ENCODE measurements at regions of chr17 and their contacts with region 1.

Region 1: GRCh38 chr17:39754161-39754951 is 16.6 kb downstream of the GRB7 start:
- DNase-seq: peak; percentile 92 to 96
- ATAC-seq: peak; percentile 93 to 95 (median 94)
- H3K4me3 ChIP-seq: peak overlapping the region; percentile 84
- H3K27ac ChIP-seq: peak overlapping the region; percentile 81
- H3K4me1 ChIP-seq: no peaks in the 10 kb centered on the region
- H3K27me3 ChIP-seq: peaks cover 0 to 3% (median 0%) of the 10 kb centered on the region in 3 donors
- CTCF ChIP-seq: peak; percentile 97

Region 2: DNA sequence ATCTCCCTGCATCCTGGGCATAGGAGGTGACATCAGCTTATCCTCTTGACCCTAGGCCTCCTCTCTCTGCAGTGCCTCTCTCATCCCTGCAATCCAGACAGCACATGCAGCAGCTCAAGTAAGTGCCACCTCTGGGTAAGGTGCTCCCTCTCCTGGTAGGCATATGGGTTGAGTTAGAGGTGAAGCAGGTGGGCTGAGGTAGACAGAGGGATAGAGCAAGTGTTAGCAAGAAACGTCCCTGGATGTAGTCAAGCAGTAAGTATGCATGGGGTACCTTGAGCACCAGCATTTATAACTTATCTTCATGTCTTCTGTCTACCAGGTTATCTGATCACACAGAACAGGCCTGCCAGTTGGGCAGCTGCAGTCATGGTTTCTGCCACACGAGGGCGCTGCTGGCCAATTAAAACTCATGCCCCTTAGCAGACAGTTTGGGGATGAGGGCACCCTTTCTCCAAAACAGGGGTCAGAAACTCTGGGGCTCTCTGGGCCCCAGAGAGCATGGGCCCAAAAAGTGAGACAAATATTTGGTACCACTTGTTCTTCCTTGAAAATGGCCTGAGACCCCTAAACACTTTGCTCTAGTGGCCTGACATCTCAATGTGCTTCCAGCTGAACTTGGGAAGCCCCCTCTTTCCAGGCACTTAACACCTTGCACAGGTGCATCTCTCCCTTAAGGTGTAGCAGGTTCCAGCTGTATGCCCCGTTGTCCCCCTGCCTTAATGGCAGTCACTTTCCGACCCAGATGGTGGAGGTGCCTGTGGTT is 206.5 kb before region 1 on chr17:
- intact Hi-C with region 1: loop called in 1 of 2 experiments (anchors 5 kb)
- DNase-seq: peak; percentile 62 to 83
- ATAC-seq: peak; percentile 55 to 87 (median 76)
- H3K4me3 ChIP-seq: no peak overlapping the region
- H3K27ac ChIP-seq: no peak overlapping the region
- H3K4me1 ChIP-seq: peaks cover 8% of the 10 kb centered on the region
- H3K27me3 ChIP-seq: no peaks in the 10 kb centered on the region
- CTCF ChIP-seq: peak; percentile 88

Region 3: DNA sequence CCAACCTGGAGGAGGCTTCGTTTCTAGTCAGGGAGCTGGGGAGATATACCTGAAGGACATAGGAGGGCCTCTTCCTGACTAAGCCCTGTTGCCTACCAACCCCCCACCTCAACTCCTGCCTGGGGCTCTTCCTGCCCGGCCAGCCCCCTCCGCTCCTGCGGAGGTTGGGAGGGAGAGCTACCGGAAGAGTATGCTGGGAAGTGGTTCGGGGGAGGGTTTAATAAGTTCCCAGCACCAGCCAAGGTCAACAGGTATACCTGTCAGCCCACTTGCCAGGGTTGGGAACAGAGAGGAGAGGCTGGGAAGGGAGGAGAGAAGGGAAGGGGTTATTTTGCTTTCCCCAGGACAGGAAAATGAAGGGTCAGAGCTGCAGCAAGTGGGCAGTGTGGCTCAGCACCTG is 123.0 kb before region 1 on chr17:
- intact Hi-C with region 1: loop called in 1 of 2 experiments (anchors 2 kb)
- DNase-seq: no peak
- ATAC-seq: no peak
- H3K4me3 ChIP-seq: no peak overlapping the region
- H3K27ac ChIP-seq: no peak overlapping the region
- H3K4me1 ChIP-seq: peaks cover 12% of the 10 kb centered on the region
- H3K27me3 ChIP-seq: peaks cover 0 to 35% (median 10%) of the 10 kb centered on the region in 3 donors
- CTCF ChIP-seq: no peak

Region 4: GRCh38 chr17:39730095-39730921 is 24.0 kb before region 1 on chr17 and contains the start of gene MIEN1:
- intact Hi-C with region 1: loop called in 1 of 2 experiments (anchors 2 kb)
- DNase-seq: peak; percentile 92 to 96
- ATAC-seq: peak; percentile 97 to 99 (median 98)
- H3K4me3 ChIP-seq: peak within 1 kb of the TSS; percentile 85
- H3K27ac ChIP-seq: peak within 1 kb of the TSS; percentile 89
- H3K4me1 ChIP-seq: peaks cover 8% of the 10 kb centered on the region
- H3K27me3 ChIP-seq: no peaks in the 10 kb centered on the region
- CTCF ChIP-seq: peak; percentile 92
- total RNA-seq, gene MIEN1: 28.2 to 44.3 (median 36.2) TPM